ENCODE measurements at regions of chr5 and their contacts with region 1.

Region 1: GRCh38 chr5:138213161-138214029 is at the start of gene CDC23:
- DNase-seq: peak; percentile 94
- ATAC-seq: peak; percentile 98
- H3K4me3 Mint-ChIP-seq: peak within 1 kb of the TSS; percentile 92
- H3K27ac Mint-ChIP-seq: peak within 1 kb of the TSS; percentile 94
- H3K4me1 Mint-ChIP-seq: peaks cover 16% of the 10 kb centered on the region
- H3K27me3 Mint-ChIP-seq: no peaks in the 10 kb centered on the region
- total RNA-seq, gene CDC23: 34.0 to 38.1 TPM

Region 2: GRCh38 chr5:137960141-137960540 is 253.3 kb before region 1 on chr5:
- CTCF ChIA-PET with region 1: no interaction called
- POLR2A ChIA-PET with region 1: no interaction called
- intact Hi-C with region 1: no loop called
- DNase-seq: no peak
- ATAC-seq: no peak
- H3K4me3 Mint-ChIP-seq: no peak overlapping the region
- H3K27ac Mint-ChIP-seq: no peak overlapping the region
- H3K4me1 Mint-ChIP-seq: no peaks in the 10 kb centered on the region
- H3K27me3 Mint-ChIP-seq: no peaks in the 10 kb centered on the region

Region 3: DNA sequence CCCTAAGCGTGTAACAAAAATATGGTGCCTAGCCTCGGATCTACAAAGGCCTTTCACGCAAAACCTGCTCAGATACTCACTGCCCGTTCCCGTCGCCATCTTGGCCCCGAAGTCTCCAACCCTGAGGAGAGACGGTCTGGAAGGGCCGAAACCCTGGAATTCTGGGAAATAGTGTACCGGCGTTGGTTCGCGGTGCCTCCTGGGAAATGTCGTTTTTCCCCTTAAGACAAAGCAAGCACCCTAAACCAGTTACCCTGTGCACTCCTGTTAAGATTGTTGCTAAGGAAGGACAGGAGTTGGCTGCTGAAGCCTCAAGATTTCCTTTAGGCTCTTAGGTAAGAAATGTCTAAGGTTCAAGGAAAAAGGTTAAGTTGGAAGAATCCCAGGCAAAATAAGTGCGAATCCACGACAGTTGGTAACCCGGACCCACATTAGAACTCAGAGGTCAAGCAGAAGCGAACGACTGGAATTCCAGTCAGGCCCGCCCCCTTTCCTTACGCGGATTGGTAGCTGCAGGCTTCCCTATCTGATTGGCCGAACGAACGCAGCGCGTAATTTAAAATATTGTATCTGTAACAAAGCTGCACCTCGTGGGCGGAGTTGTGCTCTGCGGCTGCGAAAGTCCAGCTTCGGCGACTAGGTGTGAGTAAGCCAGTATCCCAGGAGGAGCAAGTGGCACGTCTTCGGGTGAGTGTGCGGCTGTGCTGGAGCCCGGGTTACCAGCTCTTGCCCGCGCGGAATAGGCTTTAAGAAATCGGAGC is 34.7 kb before region 1 on chr5 and contains the starts of genes BRD8 and KIF20A:
- CTCF ChIA-PET with region 1: interaction called, 8 read pairs
- POLR2A ChIA-PET with region 1: interaction called, 7 read pairs
- intact Hi-C with region 1: loop called (anchors 1 kb)
- DNase-seq: peak; percentile 96
- ATAC-seq: peak; percentile 93
- H3K4me3 Mint-ChIP-seq: no peak within 1 kb of the TSS
- H3K27ac Mint-ChIP-seq: peak within 1 kb of the TSS; percentile 73
- H3K4me1 Mint-ChIP-seq: peaks cover 16% of the 10 kb centered on the region
- H3K27me3 Mint-ChIP-seq: no peaks in the 10 kb centered on the region
- total RNA-seq, gene BRD8: 60.7 to 61.4 TPM
- total RNA-seq, gene KIF20A: 66.6 to 76.3 TPM

Region 4: DNA sequence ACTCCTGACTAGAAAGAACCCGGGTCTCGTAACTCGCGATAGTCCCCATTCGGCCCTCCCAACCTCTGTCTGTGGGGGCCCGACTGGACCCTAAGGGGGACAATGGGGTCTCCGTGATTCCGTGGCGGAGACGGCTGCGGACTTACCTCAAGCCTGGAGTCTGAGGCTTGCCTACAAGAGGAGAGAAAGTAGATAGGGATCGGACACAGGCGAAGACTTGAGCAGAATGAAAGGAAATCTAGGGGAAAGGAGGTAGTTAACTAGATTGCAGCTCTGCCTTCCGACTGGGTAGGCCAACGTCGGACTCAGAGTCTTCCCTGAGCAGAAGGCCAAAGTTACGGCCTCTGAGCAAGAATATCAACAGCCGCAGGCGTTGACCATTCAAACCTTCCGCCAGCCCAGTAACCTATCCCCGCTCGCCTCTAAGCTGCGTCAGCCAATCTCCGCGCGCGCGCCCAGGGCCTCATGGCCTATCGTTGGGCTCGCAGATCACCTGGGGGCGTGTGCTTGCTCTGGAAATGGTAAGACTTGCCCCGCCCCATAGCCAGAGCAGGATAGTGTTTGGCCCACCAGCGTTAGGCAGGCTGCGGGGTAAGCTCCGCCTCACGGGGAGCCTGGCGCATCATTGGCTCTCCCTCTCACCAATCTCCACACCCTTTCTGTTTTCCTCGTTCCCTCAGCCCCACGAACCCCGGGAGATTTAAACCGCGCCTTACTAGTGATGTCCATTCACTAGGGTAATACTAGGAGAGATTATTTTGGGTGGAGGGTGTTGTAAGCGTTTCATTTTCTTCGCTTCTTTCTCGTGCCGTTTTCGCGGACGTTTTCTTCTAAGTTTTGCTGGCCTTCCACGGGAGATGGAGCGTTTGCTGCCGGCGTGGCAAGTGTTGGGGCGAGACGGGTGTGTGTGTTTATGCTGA is 118.3 kb after region 1 on chr5 and contains the start of gene CDC25C:
- CTCF ChIA-PET with region 1: interaction called, 4 read pairs
- POLR2A ChIA-PET with region 1: interaction called, 6 read pairs
- intact Hi-C with region 1: loop called (anchors 1 to 5 kb)
- DNase-seq: peak; percentile 98
- ATAC-seq: peak; percentile 100
- H3K4me3 Mint-ChIP-seq: peak within 1 kb of the TSS; percentile 86
- H3K27ac Mint-ChIP-seq: peak within 1 kb of the TSS; percentile 87
- H3K4me1 Mint-ChIP-seq: peaks cover 22% of the 10 kb centered on the region
- H3K27me3 Mint-ChIP-seq: no peaks in the 10 kb centered on the region
- total RNA-seq, gene CDC25C: 15.9 to 19.0 TPM

Region 5: DNA sequence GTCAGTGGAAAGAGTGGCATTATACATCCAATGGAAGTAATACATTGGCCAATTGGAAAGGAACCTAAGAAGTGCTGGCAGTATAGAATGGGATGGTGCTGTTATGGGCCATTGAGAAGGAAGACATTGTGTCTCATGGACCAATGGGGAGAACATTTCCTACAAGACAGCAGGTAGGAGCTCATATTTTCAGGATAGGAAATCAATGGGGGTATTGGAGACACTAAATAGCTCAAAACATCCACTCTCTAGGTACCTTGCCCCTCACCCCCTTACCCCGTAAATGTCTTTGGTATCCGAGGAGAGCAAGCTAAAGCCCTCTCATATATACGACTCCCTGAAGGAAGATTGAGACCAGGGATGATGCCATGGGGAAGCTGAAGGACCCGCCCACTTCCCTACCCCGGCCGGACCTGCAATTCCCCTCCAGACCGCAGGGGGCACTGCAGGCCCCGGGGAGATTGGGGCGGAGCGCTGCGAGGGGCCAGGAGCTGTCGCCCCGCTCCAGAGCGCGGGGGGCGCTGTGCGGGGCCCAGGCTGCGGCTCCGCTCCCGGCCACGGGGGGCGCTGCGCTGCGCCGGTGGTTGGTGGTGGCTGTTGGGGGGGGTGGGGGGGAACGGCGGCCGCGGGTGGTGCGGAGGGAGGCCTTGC is 138.8 kb after region 1 on chr5 and contains the start of gene KDM3B:
- CTCF ChIA-PET with region 1: interaction called, 18 read pairs
- POLR2A ChIA-PET with region 1: interaction called, 10 read pairs
- intact Hi-C with region 1: loop called in 1 of 2 experiments (anchors 1 kb)
- DNase-seq: peak; percentile 94
- ATAC-seq: peak; percentile 76
- H3K4me3 Mint-ChIP-seq: peak within 1 kb of the TSS; percentile 99
- H3K27ac Mint-ChIP-seq: peak within 1 kb of the TSS; percentile 96
- H3K4me1 Mint-ChIP-seq: peaks cover 44% of the 10 kb centered on the region
- H3K27me3 Mint-ChIP-seq: no peaks in the 10 kb centered on the region
- total RNA-seq, gene KDM3B: 39.0 to 40.9 TPM

Region 6: DNA sequence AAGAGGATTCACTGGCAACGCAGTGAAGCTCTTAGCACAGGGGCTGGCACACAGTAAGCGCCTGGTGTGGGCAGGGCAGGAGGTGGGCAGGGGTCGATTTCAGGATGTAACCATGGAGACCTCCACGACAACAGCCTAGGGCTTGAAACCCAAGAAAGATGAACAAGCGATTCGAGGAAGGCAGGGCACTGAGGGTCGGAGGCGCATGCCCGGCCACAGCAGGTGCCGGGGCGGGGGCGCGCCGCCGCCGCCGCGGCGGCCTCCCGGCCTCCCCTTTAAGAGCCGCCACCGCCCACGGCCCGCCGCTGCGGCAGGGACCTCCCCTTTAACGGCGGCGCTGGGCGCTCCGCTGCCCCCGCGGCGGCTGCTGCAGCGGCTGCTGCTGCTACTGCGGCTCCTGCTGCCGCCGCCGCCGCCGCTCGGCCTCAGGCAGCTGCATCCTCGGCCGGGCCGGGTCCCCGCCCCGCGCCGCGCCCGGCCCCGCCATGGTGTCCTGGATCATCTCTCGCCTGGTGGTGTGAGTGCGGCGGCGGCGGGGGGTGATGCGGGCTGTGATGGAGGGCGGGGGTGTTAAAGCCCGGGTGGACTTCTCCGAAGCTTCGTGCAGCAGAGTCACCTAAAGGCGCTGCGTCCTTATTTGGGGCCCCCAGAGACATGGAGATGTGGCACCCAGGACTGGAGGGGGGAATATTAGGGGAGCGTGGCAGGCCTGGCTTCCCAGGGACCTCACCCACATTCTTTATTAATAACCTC is 225.5 kb after region 1 on chr5 and contains the start of gene REEP2:
- CTCF ChIA-PET with region 1: no interaction called
- POLR2A ChIA-PET with region 1: no interaction called
- intact Hi-C with region 1: loop called in 1 of 2 experiments (anchors 2 kb)
- DNase-seq: peak; percentile 86
- ATAC-seq: peak; percentile 88
- H3K4me3 Mint-ChIP-seq: peak within 1 kb of the TSS; percentile 67
- H3K27ac Mint-ChIP-seq: no peak within 1 kb of the TSS
- H3K4me1 Mint-ChIP-seq: peaks cover 15% of the 10 kb centered on the region
- H3K27me3 Mint-ChIP-seq: no peaks in the 10 kb centered on the region
- total RNA-seq, gene REEP2: 4.0 to 5.6 TPM

Region 7: DNA sequence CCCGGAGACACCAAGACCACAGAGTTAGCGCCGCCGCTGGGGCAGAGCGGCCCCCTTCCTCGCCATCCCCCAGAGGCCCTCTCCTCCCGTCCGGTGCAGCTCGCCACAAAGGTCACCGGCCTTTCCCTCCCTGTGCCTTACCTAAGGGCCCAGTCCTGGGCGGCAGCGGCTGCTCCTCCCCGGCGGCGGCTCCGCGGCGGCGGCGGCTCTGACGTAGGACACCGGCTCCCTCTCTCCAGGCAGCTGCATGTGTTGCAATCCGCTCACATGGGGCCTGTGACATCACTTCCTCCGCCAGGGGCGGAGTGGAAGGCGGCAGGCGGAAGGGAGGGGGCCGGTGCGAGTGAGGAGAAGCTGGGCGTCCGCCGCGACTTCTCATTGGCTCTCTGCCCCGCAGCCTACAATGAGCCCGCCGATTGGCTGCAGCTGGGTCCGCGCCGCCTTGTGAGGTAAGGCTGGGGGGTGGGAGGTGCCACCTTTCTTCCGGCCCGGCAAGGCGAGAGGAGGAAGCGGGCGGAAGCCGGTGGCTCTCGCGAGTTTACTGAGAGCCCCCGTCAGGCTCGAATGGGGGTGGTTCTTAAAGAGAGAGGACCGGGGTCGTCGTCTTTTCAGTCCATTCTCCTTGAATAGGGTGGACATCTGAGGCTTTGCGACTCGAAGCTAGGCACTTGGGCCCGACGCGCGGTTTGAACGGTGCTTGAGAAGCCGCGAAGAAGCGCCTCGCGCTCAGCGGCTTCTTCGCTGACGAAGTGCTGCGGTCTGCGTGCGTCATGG is 329.7 kb after region 1 on chr5 and contains the start of gene ETF1:
- CTCF ChIA-PET with region 1: no interaction called
- POLR2A ChIA-PET with region 1: interaction called, 8 read pairs
- intact Hi-C with region 1: loop called in 1 of 2 experiments (anchors 1 kb)
- DNase-seq: peak; percentile 100
- ATAC-seq: peak; percentile 94
- H3K4me3 Mint-ChIP-seq: peak within 1 kb of the TSS; percentile 100
- H3K27ac Mint-ChIP-seq: peak within 1 kb of the TSS; percentile 100
- H3K4me1 Mint-ChIP-seq: peaks cover 67% of the 10 kb centered on the region
- H3K27me3 Mint-ChIP-seq: no peaks in the 10 kb centered on the region
- total RNA-seq, gene ETF1: 140 to 156 TPM

Region 8: DNA sequence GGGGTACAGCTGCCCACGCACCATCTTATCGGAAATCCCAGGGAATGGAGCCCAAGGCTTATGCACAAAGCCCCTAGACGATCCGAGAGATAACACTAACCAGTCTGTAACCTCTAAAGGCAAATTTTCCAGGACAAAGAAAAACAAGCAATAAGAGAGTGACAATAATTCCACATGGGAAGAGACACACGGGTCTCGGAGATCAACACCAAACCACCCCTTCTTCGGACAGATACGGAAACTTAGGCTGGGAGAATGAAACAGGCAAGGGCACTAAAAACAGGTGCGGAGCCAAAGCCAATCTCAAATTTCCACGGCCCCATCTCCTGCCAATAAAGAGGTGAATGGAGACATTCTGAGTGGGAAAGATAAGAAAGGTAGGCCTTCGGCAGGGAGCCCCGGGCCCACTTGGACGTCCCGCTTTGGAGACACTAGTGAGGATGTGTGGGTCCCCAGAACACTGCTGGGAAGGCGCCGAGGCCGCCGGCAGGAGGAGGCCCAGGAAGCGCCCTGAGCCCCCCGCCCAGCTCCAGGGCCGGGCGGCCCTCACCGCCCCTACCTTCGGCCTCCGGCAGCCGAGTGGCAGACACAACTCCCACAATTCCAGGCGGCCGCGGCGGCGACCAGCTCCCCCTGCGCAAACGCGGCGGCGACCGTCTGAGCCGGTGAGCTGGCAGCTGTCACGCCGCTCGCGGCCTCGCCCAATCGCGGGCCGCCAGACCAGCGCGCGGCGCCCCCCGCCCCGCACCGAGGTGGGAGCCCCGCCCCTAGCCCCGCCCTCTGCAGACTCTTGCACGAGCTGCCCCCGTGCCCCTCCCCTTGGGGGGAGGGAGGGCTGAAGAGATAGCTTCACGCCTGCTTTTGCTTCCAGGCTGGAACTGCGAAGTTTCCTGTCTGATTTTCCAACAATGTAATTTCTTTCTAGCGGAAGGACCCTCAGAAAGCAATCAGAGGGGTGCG is 984.6 kb after region 1 on chr5 and contains the start of gene SIL1:
- CTCF ChIA-PET with region 1: no interaction called
- POLR2A ChIA-PET with region 1: no interaction called
- intact Hi-C with region 1: no loop called
- DNase-seq: peak; percentile 98
- ATAC-seq: peak; percentile 100
- H3K4me3 Mint-ChIP-seq: peak within 1 kb of the TSS; percentile 90
- H3K27ac Mint-ChIP-seq: peak within 1 kb of the TSS; percentile 97
- H3K4me1 Mint-ChIP-seq: peaks cover 18% of the 10 kb centered on the region
- H3K27me3 Mint-ChIP-seq: peaks cover 2% of the 10 kb centered on the region
- total RNA-seq, gene SIL1: 11.2 to 14.4 TPM

Region 9: DNA sequence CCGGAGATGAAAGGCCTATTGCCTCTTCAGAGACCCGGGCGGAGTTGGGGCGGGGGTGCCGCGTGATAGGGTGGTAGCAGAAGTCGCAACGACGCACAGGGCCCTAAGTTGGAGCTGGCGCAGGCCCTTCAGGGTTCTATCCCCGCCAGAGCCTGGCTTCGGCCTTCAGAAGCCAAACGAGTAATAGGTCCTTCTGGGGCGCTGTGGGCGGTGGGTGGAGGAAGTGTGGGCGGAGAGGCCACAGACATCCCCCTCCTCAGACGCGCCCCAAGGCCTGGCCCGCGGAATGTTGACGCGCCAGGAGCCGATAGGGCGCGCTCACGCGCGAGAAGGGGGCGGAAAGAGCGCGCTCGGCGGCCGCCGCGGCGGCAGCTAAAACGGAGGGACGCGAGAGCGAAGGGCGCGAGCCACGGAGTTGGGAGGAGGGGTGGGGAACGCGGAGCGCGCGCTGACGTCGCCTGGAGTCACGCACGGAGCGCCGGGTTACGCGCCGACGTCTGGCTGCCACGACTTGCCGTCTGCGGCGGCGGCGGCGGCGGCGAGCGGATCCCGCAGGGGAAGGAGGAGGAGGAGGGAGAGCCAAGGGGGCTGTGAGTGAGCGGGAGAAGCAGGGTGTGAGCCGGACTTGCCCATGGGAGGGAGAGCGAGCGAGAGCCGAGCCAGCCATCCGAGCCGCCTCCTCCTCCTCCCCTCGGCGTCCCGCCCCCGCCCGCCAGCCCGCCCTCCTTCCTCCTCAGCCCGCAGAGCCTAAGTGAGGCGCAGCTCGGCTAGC is 1894.1 kb after region 1 on chr5:
- CTCF ChIA-PET with region 1: no interaction called
- POLR2A ChIA-PET with region 1: no interaction called
- intact Hi-C with region 1: loop called in 1 of 2 experiments (anchors 10 kb)
- DNase-seq: peak; percentile 96
- ATAC-seq: peak; percentile 90
- H3K4me3 Mint-ChIP-seq: peak overlapping the region; percentile 99
- H3K27ac Mint-ChIP-seq: peak overlapping the region; percentile 95
- H3K4me1 Mint-ChIP-seq: peaks cover 43% of the 10 kb centered on the region
- H3K27me3 Mint-ChIP-seq: peaks cover 3% of the 10 kb centered on the region